ENCODE measurements at regions of chr12 and their contacts with region 1.

Region 1: DNA sequence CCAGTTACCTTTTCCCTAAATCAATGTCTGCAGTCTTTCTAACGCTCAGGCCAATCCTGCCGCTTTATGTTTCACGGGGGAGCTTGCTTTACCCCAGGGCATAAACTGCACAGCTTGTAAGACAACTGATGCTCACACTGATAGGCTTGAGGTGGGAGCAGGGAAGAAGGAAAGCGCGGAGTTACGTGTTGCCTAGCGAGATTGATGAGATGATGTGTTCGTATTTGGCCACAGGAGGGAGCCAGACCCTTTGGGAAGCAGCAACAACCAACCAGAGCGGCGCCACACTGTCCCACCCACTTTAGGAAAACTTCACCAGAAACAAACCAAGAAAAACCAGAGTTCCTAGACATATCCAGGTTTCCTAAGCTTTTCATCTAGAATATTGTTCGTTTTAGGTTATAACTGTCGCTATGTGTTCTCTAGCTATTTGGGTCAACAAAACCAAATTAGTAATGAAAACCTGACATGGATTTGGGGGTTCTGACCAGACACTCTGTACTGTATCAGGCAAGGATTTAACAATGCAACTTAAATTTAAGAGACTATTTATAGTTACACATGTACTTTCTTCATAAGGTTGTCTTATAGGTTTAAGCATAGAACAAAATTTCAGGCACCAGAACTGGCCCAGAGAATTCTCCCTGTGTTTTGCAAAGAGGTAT is 2.4 kb downstream of the IL26 start:
- DNase-seq: peak; percentile 86
- ATAC-seq: peak; percentile 92
- H3K4me3 Mint-ChIP-seq: peak overlapping the region; percentile 20
- H3K27ac Mint-ChIP-seq: peak overlapping the region; percentile 53
- H3K4me1 Mint-ChIP-seq: peaks cover 11% of the 10 kb centered on the region
- H3K27me3 Mint-ChIP-seq: peaks cover 2% of the 10 kb centered on the region
- CTCF ChIP-seq: peak; percentile 96

Region 2: DNA sequence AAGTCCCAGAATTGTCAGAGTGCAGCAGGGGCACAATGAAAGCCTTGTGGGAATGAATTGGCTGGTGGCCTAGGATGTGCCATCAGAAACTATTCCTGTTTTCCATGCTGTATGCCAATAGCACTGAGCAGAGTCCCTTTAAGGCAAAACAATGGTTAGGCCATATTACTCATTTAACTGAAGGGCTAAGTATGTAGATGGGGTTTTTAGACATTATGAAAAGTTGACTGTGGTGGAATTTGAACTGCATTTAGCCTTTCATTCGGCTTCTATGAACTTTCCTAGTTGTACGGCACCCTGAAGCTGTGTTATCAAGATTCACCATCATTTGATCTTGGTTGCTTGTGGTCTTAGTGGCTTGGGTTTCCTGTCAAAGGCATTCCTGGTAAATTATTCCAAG is 22.4 kb before region 1 on chr12:
- CTCF ChIA-PET with region 1: no interaction called
- POLR2A ChIA-PET with region 1: no interaction called
- intact Hi-C with region 1: no loop called
- DNase-seq: no peak
- ATAC-seq: peak; percentile 49
- H3K4me3 Mint-ChIP-seq: no peak overlapping the region
- H3K27ac Mint-ChIP-seq: no peak overlapping the region
- H3K4me1 Mint-ChIP-seq: peaks cover 45% of the 10 kb centered on the region
- H3K27me3 Mint-ChIP-seq: no peaks in the 10 kb centered on the region
- CTCF ChIP-seq: no peak

Region 3: DNA sequence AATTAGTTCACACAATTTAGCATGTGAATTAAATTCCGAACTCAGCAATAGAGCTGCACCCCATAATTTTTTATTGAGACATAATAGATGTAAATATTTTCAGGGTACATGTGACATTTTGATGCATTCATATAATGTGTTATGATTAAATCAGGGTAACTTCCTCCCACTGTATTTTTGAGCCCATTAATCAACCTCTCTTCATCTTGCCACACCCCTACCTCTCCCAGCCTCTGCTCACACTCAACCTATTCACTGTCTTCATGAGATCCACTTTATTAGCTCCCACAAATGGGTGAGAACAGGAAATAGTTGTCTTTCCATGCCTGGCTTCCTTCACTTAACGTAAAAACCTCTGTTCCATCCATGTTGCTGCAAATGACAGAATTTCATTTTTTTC is 12.3 kb before region 1 on chr12:
- CTCF ChIA-PET with region 1: interaction called, 24 read pairs
- POLR2A ChIA-PET with region 1: no interaction called
- intact Hi-C with region 1: no loop called
- DNase-seq: no peak
- ATAC-seq: no peak
- H3K4me3 Mint-ChIP-seq: no peak overlapping the region
- H3K27ac Mint-ChIP-seq: no peak overlapping the region
- H3K4me1 Mint-ChIP-seq: peaks cover 15% of the 10 kb centered on the region
- H3K27me3 Mint-ChIP-seq: peaks cover 2% of the 10 kb centered on the region
- CTCF ChIP-seq: no peak

Region 4: GRCh38 chr12:68245180-68246021 is 22.2 kb after region 1 on chr12:
- CTCF ChIA-PET with region 1: interaction called, 13 read pairs
- POLR2A ChIA-PET with region 1: no interaction called
- intact Hi-C with region 1: no loop called
- DNase-seq: no peak
- ATAC-seq: no peak
- H3K4me3 Mint-ChIP-seq: no peak overlapping the region
- H3K27ac Mint-ChIP-seq: no peak overlapping the region
- H3K4me1 Mint-ChIP-seq: peaks cover 24% of the 10 kb centered on the region
- H3K27me3 Mint-ChIP-seq: peaks cover 3% of the 10 kb centered on the region
- CTCF ChIP-seq: no peak

Region 5: DNA sequence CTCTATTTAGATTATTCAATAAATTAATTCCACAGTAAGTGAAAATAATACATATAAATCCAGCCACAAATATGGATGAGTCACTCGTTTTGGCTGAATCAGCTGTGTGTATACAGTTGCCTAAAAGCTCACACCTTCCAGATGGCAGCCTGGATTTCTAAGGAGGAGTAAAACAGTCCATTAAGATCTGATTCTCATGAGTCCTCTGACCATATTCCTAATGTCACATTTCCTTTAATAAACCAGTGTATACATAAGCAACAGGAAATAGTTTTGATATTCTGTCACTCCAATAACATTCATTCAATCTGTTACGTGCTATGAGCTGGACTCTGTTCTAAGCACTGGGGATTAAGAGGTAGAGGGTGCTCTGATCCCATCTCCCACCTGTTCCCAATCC is 87.2 kb after region 1 on chr12:
- CTCF ChIA-PET with region 1: interaction called, 146 read pairs
- POLR2A ChIA-PET with region 1: no interaction called
- intact Hi-C with region 1: no loop called
- DNase-seq: no peak
- ATAC-seq: no peak
- H3K4me3 Mint-ChIP-seq: no peak overlapping the region
- H3K27ac Mint-ChIP-seq: no peak overlapping the region
- H3K4me1 Mint-ChIP-seq: peaks cover 13% of the 10 kb centered on the region
- H3K27me3 Mint-ChIP-seq: no peaks in the 10 kb centered on the region
- CTCF ChIP-seq: no peak

Region 6: DNA sequence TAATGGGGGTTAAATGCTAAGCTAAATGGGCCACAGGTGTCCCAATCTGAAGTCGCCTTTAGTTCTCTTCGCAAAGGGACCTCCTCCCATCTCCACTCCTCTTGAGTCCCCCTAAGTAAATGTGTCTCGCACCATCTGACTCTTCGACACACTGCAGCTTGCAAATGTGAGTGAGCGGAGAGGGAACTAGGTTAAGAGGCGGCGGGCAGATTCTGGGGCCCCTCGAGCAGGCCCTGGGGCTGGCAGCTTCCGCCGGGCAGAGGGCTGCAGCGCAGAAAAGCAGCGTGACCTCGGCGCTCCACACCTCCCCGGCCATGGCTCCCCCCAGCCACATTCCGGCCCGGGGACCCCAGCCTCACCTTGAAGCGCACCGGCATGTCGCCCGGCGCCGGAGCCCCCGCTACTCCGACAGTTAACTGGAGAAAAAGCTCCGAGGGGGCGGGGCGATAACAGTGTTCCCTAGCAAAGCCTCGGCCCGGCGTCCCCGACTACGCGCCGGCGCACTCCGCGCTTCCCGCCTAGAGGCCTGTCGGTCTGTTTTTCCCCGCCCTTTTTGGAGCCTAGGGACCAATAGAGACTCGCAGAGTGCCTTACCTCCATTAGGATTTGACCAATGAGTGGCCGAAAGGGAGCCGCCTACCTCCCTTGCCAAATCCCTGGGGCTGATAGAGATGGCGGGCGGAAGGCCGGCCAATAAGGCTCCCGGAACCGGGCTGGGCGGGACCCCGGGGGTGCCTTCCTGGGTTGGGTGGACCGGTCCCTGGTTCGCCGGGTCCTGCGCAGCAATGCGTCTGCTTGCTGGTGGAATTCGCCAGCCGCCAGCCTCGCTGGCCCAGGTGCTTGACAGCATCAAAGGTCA is 108.9 kb after region 1 on chr12 and contains the start of gene MDM1:
- CTCF ChIA-PET with region 1: interaction called, 14 read pairs
- POLR2A ChIA-PET with region 1: interaction called, 3 read pairs
- intact Hi-C with region 1: no loop called
- DNase-seq: peak; percentile 98
- ATAC-seq: peak; percentile 98
- H3K4me3 Mint-ChIP-seq: peak within 1 kb of the TSS; percentile 83
- H3K27ac Mint-ChIP-seq: peak within 1 kb of the TSS; percentile 83
- H3K4me1 Mint-ChIP-seq: peaks cover 39% of the 10 kb centered on the region
- H3K27me3 Mint-ChIP-seq: no peaks in the 10 kb centered on the region
- CTCF ChIP-seq: no peak
- total RNA-seq, gene MDM1: 15.4 to 17.9 TPM